Activated naive CD4-positive, alpha-beta T cell treated with anti-CD3 and anti-CD28 coated beads for 36 hours (primary cell): ENCODE measurements at regions of chr1 and their contacts with region 1.

Region 1: DNA sequence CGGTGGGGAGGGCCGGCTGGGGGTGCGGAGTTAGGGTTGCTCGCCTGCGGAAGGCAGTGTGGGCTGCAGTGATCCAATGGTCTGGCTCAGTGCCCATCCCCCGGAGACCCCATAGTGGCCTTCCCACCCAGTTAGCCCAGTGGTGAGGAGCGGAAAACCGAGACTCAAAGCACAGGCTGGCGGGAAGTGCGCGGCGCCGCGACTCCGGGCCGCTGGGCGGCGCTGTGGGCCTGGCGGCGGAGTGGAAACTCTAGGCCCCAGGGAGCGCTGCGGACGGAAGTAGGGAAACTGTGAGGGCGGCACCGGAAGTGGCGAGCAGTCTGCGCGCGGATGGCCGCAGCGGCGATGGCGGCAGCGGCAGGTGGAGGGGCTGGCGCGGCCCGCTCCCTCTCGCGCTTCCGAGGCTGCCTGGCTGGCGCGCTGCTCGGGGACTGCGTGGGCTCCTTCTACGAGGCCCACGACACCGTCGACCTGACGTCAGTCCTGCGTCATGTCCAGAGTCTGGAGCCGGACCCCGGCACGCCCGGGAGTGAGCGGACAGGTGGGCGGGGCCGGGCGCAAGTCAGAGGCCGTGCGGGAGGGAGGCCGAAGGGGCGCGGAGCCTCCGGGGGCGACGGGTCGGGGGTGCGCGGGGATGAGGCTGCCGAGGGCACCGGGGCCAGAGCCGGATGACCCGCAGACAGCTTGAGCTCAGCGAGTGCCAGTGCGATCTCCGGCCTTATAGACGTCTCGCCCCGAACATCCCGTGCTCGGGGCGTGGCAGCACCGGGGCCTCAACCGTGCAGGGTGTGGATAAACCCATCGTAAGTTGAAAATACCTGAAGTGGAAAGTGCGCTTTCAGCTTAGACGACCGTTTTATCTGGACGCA is at the start of gene ADPRS:
- DNase-seq: peak; percentile 92
- H3K4me3 Mint-ChIP-seq: peak within 1 kb of the TSS; percentile 87
- H3K27ac Mint-ChIP-seq: peak within 1 kb of the TSS; percentile 72
- H3K4me1 Mint-ChIP-seq: peaks cover 20% of the 10 kb centered on the region
- H3K27me3 Mint-ChIP-seq: peaks cover 21% of the 10 kb centered on the region
- total RNA-seq, gene ADPRS: 23.2 to 24.6 TPM

Region 2: DNA sequence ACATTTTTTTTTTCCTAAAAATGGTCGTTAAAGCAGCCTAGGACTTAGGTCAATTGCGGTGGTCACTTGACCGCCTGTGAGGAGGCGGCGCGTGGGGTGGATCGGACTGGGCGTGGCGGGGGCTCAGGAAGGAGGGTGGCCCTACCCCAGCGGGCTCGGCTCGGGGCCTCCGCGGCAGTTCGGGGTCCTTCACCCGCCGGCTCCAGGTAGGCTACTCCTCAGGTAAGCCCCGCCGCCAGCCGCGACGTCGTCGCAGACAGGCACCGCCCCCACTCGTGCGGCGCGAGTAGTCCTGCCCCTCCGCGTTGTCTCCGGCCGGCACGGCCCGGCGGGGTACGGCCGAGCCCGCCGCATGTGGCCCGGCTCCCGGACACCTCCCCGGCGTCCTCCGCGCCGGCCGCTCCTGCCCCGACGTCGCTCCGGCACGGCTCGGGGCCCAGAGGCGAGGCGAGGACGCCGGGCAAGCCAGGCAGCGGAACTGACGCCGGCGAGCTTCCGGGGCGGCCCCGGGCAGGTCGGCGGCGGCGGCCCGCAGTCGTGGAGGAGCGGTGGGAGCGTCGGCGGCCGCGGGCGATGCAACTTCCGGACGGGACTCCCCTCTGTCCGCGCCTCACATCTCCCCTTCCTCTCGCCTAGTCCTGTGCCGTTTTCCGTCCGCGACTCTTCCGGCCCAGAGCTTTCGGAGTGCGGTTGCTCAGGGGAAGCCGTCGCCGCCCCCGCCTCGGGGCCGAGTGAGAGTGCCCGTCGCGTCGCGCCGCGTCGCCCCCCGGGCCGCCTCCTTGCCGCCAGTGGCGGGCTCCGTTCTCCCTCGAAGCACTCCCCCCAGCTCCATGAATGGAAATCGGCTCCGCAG is 158.0 kb before region 1 on chr1 and contains the start of gene AGO3:
- CTCF ChIA-PET with region 1: no interaction called
- intact Hi-C with region 1: loop called (anchors 1 kb)
- DNase-seq: peak; percentile 92
- H3K4me3 Mint-ChIP-seq: peak within 1 kb of the TSS; percentile 94
- H3K27ac Mint-ChIP-seq: peak within 1 kb of the TSS; percentile 90
- H3K4me1 Mint-ChIP-seq: peaks cover 35% of the 10 kb centered on the region
- H3K27me3 Mint-ChIP-seq: no peaks in the 10 kb centered on the region
- total RNA-seq, gene AGO3: 25.1 to 28.2 TPM